ENCODE measurements at regions of chr1 and their contacts with region 1.

Region 1: DNA sequence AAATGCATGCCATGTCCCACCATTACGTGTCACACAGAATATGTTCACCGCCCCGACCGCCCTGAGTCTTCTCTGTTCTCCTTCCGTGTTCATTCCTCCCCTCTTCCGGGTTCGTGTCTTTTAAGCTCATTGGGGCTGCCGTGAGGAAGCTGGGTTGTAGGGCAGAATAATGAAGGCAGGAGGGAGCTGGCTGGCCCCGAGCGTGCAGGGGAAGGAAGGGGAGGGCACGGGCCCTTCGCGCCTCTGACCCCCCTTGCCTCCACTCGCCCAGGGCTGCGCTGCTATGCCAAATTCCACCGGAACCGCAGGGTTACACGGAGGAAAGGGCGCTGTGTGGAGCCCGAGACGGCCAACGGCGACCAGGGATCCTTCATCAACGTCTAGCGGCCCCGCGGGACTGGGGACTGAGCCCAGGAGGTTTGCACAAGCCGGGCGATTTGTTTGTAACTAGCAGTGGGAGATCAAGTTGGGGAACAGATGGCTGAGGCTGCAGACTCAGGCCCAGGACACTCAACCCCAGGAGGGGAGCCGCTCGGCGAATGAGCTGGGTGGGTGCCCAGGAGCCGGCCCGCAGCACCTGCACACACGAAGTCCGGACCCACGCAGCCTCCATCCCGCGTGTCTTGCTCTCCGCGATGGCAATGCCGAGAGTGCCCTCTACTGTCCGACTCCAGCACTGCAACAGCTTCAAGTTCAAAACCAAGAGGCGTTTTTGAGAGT is 16.5 kb upstream of the AGTRAP start:
- DNase-seq: peak; percentile 78 to 84
- ATAC-seq: peak; percentile 77 to 91 (median 83)
- H3K4me3 ChIP-seq: peak overlapping the region in 9 of 10 donors; percentile 14 to 55 (median 46)
- H3K27ac ChIP-seq: peak overlapping the region in 6 of 10 donors; percentile 10 to 83 (median 38)
- H3K4me1 ChIP-seq: peaks cover 0 to 18% (median 10%) of the 10 kb centered on the region in 9 donors
- H3K27me3 ChIP-seq: peaks cover 0 to 29% (median 0%) of the 10 kb centered on the region in 7 donors
- CTCF ChIP-seq: peak; percentile 86 to 99 (median 98)

Region 2: GRCh38 chr1:11037740-11038182 is 681.7 kb before region 1 on chr1:
- intact Hi-C with region 1: loop called in 1 of 10 experiments (anchors 10 kb)
- DNase-seq: peak; percentile 82 to 88
- ATAC-seq: peak; percentile 86 to 97 (median 94)
- H3K4me3 ChIP-seq: no peak overlapping the region
- H3K27ac ChIP-seq: no peak overlapping the region
- H3K4me1 ChIP-seq: peaks cover 0 to 13% (median 3%) of the 10 kb centered on the region in 9 donors
- H3K27me3 ChIP-seq: no peaks in the 10 kb centered on the region
- CTCF ChIP-seq: peak; percentile 89 to 99 (median 97)

Region 3: DNA sequence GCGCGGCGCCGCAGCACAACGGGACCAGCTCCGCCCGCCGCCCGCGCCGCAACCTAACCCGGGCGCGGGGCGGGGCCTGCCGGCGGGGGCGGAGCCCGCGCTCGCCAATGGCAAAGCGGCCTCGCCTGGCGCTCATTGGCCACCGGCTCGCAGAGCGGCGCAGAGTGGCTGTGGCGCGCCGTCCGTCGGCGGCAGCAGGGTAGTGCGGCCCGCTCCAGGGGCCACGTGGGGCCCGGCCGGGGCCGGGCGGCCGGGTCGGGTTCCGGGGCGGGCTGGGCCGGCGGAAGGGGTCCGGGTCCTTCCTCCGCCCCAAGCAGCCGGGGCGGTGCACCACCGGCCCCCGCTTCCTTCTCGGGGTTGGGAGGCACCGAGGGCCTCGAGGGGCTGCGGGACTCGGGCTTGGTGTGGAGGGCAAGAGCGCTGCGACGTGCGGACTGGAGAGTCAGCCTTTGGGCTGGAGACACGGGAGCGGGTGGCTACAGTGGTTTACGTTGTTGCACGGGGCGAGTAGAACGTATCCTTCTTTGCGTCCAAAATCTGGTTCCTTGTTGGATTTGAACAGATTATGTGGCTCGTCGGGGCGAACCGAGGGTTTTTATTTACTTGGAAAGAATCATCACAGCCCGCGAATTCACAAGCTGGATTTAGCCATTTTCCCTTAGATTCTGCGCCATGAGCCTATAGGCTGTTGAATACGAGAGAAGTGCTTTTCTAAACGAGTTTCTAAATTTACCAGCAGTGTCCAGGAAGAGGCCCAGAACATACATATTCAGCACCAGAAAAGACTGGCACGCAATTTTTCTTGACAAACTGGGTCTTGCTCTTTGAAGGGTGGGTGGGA is 659.3 kb before region 1 on chr1 and contains the start of gene SRM:
- intact Hi-C with region 1: loop called in 1 of 10 experiments (anchors 10 kb)
- DNase-seq: peak; percentile 87 to 93
- ATAC-seq: peak; percentile 99 to 100 (median 99)
- H3K4me3 ChIP-seq: peak within 1 kb of the TSS; percentile 59 to 99 (median 95)
- H3K27ac ChIP-seq: peak within 1 kb of the TSS in 9 of 10 donors; percentile 63 to 88 (median 79)
- H3K4me1 ChIP-seq: peaks cover 8 to 32% (median 22%) of the 10 kb centered on the region in 9 donors
- H3K27me3 ChIP-seq: no peaks in the 10 kb centered on the region
- CTCF ChIP-seq: peak; percentile 17 to 80 (median 53)
- total RNA-seq, gene SRM: 35.4 to 80.6 (median 49.8) TPM

Region 4: GRCh38 chr1:11653101-11653860 is 66.2 kb before region 1 on chr1:
- intact Hi-C with region 1: loop called in 6 of 10 experiments (anchors 1 to 5 kb)
- DNase-seq: no peak
- ATAC-seq: no peak
- H3K4me3 ChIP-seq: no peak overlapping the region
- H3K27ac ChIP-seq: peak overlapping the region in 1 of 10 donors; percentile 15
- H3K4me1 ChIP-seq: peaks cover 4 to 44% (median 30%) of the 10 kb centered on the region in 9 donors
- H3K27me3 ChIP-seq: peaks cover 3 to 51% (median 20%) of the 10 kb centered on the region in 7 donors
- CTCF ChIP-seq: no peak

Region 5: GRCh38 chr1:11661103-11661502 is 58.4 kb before region 1 on chr1:
- intact Hi-C with region 1: loop called in 5 of 10 experiments (anchors 2 to 5 kb)
- DNase-seq: no peak
- ATAC-seq: no peak
- H3K4me3 ChIP-seq: no peak overlapping the region
- H3K27ac ChIP-seq: no peak overlapping the region
- H3K4me1 ChIP-seq: peaks cover 0 to 19% (median 6%) of the 10 kb centered on the region in 9 donors
- H3K27me3 ChIP-seq: peaks cover 0 to 6% (median 0%) of the 10 kb centered on the region in 7 donors
- CTCF ChIP-seq: no peak

Region 6: GRCh38 chr1:11670747-11671146 is 48.7 kb before region 1 on chr1:
- intact Hi-C with region 1: loop called in 2 of 10 experiments (anchors 2 kb)
- DNase-seq: no peak
- ATAC-seq: no peak
- H3K4me3 ChIP-seq: no peak overlapping the region
- H3K27ac ChIP-seq: peak overlapping the region in 1 of 10 donors; percentile 0
- H3K4me1 ChIP-seq: peaks cover 0 to 15% (median 5%) of the 10 kb centered on the region in 9 donors
- H3K27me3 ChIP-seq: no peaks in the 10 kb centered on the region
- CTCF ChIP-seq: no peak

Region 7: DNA sequence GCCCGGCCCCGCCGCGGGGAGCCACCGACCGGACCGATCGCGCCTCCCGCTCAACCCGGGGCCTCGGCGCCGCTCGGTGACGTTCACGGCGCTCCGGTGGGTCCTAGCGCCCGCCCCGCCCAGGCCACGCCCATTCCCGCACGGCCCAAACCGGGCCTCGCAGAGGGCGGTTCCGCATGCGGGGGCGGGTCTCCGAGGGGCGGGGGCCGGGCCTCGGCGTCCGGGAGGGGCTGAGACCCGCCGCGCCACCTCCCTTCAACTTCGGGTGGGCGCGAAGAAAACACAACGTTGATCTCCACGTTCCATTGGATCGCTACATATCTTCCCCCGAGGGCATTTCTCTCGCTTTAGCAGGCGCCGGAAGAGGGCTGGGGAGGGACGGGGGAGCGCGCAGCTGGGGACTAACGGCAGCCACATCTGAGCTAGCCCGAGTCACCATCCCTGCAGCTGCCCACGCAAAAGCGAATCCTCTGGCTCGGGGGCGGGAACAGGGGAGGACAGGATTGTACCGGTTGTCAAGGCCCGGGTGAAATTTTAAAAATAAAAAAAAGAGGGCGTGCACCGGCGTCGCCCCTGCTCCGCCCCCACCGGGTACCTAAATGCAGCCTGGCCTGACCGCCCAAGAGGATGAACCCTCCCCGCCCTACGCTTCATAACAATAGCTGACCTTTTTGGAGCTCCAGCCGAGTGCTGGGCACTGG is 38.3 kb before region 1 on chr1 and contains the start of gene MAD2L2:
- intact Hi-C with region 1: loop called in 2 of 10 experiments (anchors 5 kb)
- DNase-seq: peak; percentile 89 to 90
- ATAC-seq: peak; percentile 96 to 98 (median 97)
- H3K4me3 ChIP-seq: peak within 1 kb of the TSS; percentile 58 to 99 (median 82)
- H3K27ac ChIP-seq: peak within 1 kb of the TSS; percentile 10 to 96 (median 86)
- H3K4me1 ChIP-seq: peaks cover 3 to 19% (median 17%) of the 10 kb centered on the region in 9 donors
- H3K27me3 ChIP-seq: peaks cover 0 to 9% (median 0%) of the 10 kb centered on the region in 7 donors
- CTCF ChIP-seq: no peak
- total RNA-seq, gene MAD2L2: 10.9 to 28.5 (median 17.0) TPM

Region 8: GRCh38 chr1:11731691-11732283 is 12.3 kb after region 1 on chr1:
- intact Hi-C with region 1: no loop called
- DNase-seq: peak; percentile 59 to 83
- ATAC-seq: peak; percentile 47 to 69 (median 55)
- H3K4me3 ChIP-seq: peak overlapping the region in 7 of 10 donors; percentile 9 to 53 (median 39)
- H3K27ac ChIP-seq: peak overlapping the region in 9 of 10 donors; percentile 25 to 89 (median 72)
- H3K4me1 ChIP-seq: peaks cover 6 to 64% (median 37%) of the 10 kb centered on the region in 9 donors
- H3K27me3 ChIP-seq: no peaks in the 10 kb centered on the region
- CTCF ChIP-seq: no peak